ENCODE measurements at regions of chr2 and their contacts with region 1.

Region 1: DNA sequence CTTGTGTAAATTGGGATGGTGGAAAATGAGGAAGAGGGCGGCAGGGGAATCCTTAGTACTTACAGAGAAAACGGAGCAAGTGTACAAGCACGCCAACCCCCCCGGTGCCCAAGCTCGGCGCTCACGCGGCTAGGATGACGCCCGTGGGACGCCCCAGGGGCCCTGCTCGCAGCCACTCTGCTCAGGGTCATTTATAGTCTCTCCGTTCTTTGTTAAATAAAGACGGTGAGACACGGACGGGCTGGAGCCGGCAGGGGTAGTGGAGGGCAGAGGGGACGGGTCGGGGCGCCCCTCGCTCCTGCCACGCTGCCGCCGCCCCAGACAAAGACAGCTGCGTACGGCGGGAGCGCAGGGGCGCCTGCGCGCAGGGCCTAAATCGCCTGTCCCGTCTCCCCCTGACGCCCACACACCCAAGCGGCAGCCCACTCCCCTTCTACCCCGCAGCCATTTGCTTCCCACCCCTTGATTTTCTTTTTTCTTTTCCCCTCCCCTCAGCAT is 37.8 kb downstream of the PCBP1 start:
- DNase-seq: peak; percentile 55
- H3K4me3 Mint-ChIP-seq: peak overlapping the region; percentile 90
- H3K27ac Mint-ChIP-seq: peak overlapping the region; percentile 98
- H3K4me1 Mint-ChIP-seq: peaks cover 57% of the 10 kb centered on the region
- H3K27me3 Mint-ChIP-seq: no peaks in the 10 kb centered on the region

Region 2: DNA sequence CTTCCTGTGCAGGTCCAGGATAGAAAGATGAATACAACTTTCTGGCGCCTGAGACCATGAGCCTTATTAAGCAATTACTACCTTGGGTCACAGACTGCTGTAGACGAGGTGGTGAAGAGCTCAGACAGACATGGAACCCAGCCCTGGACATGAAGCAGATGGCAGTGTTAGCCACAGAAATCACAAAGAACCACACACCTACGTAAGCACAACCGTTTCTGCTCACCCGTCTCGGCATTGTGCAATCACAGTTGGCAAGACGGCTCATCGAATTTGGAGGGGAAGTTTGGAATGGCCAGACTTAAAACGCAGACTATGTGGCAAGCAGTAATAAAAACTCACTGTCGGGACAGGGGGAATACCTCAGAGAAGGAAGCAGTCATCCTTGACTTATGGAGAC is 139.3 kb before region 1 on chr2:
- intact Hi-C with region 1: no loop called
- DNase-seq: no peak
- H3K4me3 Mint-ChIP-seq: no peak overlapping the region
- H3K27ac Mint-ChIP-seq: no peak overlapping the region
- H3K4me1 Mint-ChIP-seq: peaks cover 3% of the 10 kb centered on the region
- H3K27me3 Mint-ChIP-seq: no peaks in the 10 kb centered on the region

Region 3: DNA sequence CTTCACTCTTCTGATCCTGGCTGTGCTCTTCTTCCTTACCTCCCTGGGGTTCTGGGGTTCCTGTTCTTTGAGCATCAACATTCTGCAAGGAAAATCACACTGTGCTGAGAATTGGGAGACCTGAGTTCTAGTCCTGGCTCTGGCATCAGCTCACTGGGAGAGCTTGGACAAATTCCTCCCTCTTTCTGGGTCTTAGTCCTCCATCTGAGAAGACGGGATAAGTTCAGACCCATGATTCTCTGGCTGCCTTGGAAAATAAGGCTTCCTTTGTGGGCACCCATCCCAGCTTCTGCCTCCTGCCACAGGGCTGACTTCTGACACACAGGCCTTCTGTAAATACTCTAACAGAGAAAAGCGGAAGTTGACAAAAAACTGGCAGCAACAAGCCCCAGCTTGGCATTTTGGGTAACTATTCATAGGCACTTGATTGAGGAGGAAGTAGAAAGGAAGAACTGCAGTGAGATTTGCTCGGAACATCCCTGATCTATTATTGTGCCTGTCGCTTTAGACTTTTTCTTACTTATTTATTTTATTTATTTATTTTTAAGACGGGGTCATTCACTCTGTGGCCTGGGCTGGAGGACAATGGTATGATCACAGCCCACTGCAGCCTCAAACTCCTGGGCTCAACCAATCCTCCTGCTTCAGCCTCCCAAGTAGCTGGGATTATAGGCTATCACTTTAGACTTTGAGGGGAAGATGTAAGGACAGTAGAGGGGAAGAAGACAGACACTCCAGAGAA is 29.9 kb before region 1 on chr2:
- intact Hi-C with region 1: loop called (anchors 2 kb)
- DNase-seq: peak; percentile 46
- H3K4me3 Mint-ChIP-seq: peak overlapping the region; percentile 85
- H3K27ac Mint-ChIP-seq: peak overlapping the region; percentile 98
- H3K4me1 Mint-ChIP-seq: peaks cover 42% of the 10 kb centered on the region
- H3K27me3 Mint-ChIP-seq: no peaks in the 10 kb centered on the region

Region 4: GRCh38 chr2:70104231-70105111 is 20.6 kb before region 1 on chr2:
- intact Hi-C with region 1: loop called (anchors 1 kb)
- DNase-seq: peak; percentile 29
- H3K4me3 Mint-ChIP-seq: peak overlapping the region; percentile 78
- H3K27ac Mint-ChIP-seq: peak overlapping the region; percentile 90
- H3K4me1 Mint-ChIP-seq: peaks cover 52% of the 10 kb centered on the region
- H3K27me3 Mint-ChIP-seq: no peaks in the 10 kb centered on the region

Measured in activated T-helper 2 cell treated with anti-CD3 and anti-CD28 coated beads, Interferon-gamma antibody, Interleukin-2, Interleukin-4, amounts not matched to agents 10 μg/mL and 5 μg/mL and 100 μg/mL, durations not matched to agents 14 hours and 24 hours and 36 hours (primary cell).